ENCODE measurements at regions of chr17 and their contacts with region 1.

Region 1: GRCh38 chr17:10881959-10882358 is 44.1 kb upstream of the PIRT start:
- DNase-seq: no peak
- ATAC-seq: no peak
- H3K4me3 ChIP-seq: no peak overlapping the region
- H3K27ac ChIP-seq: no peak overlapping the region
- H3K4me1 ChIP-seq: no peaks in the 10 kb centered on the region
- H3K27me3 ChIP-seq: peaks cover 0 to 35% (median 15%) of the 10 kb centered on the region in 7 donors
- CTCF ChIP-seq: no peak

Region 2: GRCh38 chr17:10907370-10907769 is 25.4 kb after region 1 on chr17:
- intact Hi-C with region 1: no loop called
- DNase-seq: peak; percentile 26 to 33
- ATAC-seq: peak in 4 of 8 donors; percentile 46 to 76 (median 68)
- H3K4me3 ChIP-seq: no peak overlapping the region
- H3K27ac ChIP-seq: no peak overlapping the region
- H3K4me1 ChIP-seq: no peaks in the 10 kb centered on the region
- H3K27me3 ChIP-seq: peaks cover 0 to 9% (median 0%) of the 10 kb centered on the region in 7 donors
- CTCF ChIP-seq: no peak

Region 3: DNA sequence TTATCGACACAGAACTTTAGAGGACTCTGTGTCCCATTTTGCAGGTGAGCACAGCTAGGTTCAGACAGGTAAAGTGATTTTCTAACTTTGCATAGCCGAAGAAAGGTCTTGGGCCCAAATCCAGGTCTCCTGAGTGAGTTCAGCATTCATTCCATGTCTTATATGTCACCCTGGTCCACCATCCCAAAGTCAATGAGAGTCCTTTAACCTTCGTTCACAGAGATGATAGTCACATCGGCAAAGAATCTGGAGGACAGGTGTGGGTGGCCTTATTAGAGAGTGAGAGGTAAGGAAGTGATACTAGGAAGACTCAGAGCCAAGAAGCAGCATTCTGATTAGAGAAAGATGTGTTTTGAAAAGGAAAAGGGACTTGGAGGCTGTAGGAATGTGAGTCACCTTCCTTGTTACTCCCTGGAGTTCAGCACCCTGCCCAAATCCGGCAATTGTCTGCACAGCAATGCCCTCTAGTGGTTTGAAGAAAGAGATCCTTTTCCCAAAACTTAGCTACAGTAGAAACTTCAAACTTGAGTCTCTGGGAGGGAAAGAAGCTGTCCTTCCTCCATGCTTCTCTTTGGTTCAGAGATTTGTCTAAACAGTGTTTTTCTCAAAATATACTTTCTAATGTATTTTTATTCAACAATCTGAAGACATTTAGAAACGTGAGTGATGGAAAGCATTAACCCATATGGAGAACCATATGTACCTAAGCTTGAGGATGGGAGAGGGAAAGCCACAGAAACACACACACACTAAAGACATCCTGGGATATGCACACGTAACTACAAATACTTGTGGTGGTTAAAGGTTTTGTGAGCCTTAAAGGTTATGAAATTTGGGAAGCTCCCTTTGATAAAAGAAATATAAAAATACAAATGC is 262.6 kb after region 1 on chr17:
- intact Hi-C with region 1: loop called in 9 of 10 experiments (anchors 1 to 10 kb)
- DNase-seq: peak in 1 of 2 donors; percentile 27
- ATAC-seq: peak in 2 of 8 donors; percentile 39 to 48
- H3K4me3 ChIP-seq: no peak overlapping the region
- H3K27ac ChIP-seq: no peak overlapping the region
- H3K4me1 ChIP-seq: peaks cover 0 to 8% (median 0%) of the 10 kb centered on the region in 9 donors
- H3K27me3 ChIP-seq: peaks cover 0 to 3% (median 0%) of the 10 kb centered on the region in 7 donors
- CTCF ChIP-seq: peak; percentile 16 to 77 (median 66)

Measured in heart right ventricle (tissue), 16 donors.